A673 (cell line): ENCODE measurements at regions of chrX and their contacts with region 1.

Region 1: GRCh38 chrX:36480441-36480990 is 527.6 kb upstream of the FAM47C start:
- DNase-seq: peak; percentile 90
- H3K4me3 ChIP-seq: no peak overlapping the region
- H3K27ac ChIP-seq: peak overlapping the region; percentile 98
- H3K4me1 ChIP-seq: peaks cover 34% of the 10 kb centered on the region
- H3K27me3 ChIP-seq: no peaks in the 10 kb centered on the region
- CTCF ChIP-seq: no peak

Region 2: GRCh38 chrX:35380808-35381700 is 1099.5 kb before region 1 on chrX:
- CTCF ChIA-PET with region 1: no interaction called
- POLR2A ChIA-PET with region 1: no interaction called
- intact Hi-C with region 1: loop called (anchors 5 kb)
- DNase-seq: peak; percentile 55
- H3K4me3 ChIP-seq: no peak overlapping the region
- H3K27ac ChIP-seq: no peak overlapping the region
- H3K4me1 ChIP-seq: no peaks in the 10 kb centered on the region
- H3K27me3 ChIP-seq: no peaks in the 10 kb centered on the region
- CTCF ChIP-seq: peak; percentile 82

Region 3: GRCh38 chrX:36422368-36422767 is 58.1 kb before region 1 on chrX:
- CTCF ChIA-PET with region 1: no interaction called
- POLR2A ChIA-PET with region 1: no interaction called
- intact Hi-C with region 1: no loop called
- DNase-seq: no peak
- H3K4me3 ChIP-seq: no peak overlapping the region
- H3K27ac ChIP-seq: no peak overlapping the region
- H3K4me1 ChIP-seq: no peaks in the 10 kb centered on the region
- H3K27me3 ChIP-seq: no peaks in the 10 kb centered on the region
- CTCF ChIP-seq: no peak

Region 4: GRCh38 chrX:36434524-36435147 is 45.9 kb before region 1 on chrX:
- CTCF ChIA-PET with region 1: no interaction called
- POLR2A ChIA-PET with region 1: interaction called, 6 read pairs
- intact Hi-C with region 1: loop called (anchors 1 kb)
- DNase-seq: peak; percentile 92
- H3K4me3 ChIP-seq: no peak overlapping the region
- H3K27ac ChIP-seq: peak overlapping the region; percentile 79
- H3K4me1 ChIP-seq: peaks cover 22% of the 10 kb centered on the region
- H3K27me3 ChIP-seq: no peaks in the 10 kb centered on the region
- CTCF ChIP-seq: no peak

Region 5: DNA sequence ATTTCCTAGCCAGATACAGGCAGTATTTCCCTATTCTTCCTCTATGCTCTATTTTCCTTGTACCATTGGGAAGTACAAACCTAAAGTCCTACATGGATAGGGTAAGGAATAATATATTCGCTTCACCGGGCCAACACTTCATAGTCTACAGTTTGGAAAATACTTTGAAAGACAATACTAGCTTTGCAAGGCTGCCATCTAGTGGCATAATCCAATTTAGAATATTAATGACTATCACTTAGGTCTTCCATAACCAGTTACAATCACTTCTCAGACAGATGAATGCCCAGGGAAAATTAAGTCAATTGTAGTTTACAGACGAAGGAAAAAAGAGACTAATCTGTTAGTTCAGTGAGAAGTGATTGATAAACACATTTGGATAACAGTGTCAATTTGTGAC is 386.6 kb after region 1 on chrX:
- CTCF ChIA-PET with region 1: no interaction called
- POLR2A ChIA-PET with region 1: no interaction called
- intact Hi-C with region 1: loop called (anchors 2 kb)
- DNase-seq: peak; percentile 82
- H3K4me3 ChIP-seq: no peak overlapping the region
- H3K27ac ChIP-seq: peak overlapping the region; percentile 24
- H3K4me1 ChIP-seq: peaks cover 29% of the 10 kb centered on the region
- H3K27me3 ChIP-seq: no peaks in the 10 kb centered on the region
- CTCF ChIP-seq: peak; percentile 70

Region 6: DNA sequence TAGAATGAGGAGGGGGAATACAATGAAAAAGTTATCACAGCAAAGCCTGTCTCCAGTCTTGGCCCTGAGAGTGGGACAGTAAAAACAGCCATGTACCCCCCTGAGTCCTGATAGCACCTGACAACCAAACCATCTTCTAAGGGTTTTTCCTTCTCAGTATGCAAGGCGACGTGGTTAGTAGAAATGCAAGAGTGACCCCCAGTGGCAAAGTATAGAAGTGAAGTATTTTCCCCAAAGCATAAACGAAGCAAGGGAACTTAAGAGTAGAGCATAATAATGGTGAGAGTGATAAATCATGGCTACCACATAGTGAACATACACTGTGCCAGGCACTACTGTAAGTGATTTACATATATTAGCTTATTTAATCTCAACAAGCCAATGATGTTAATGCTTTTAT is 580.5 kb after region 1 on chrX:
- CTCF ChIA-PET with region 1: no interaction called
- POLR2A ChIA-PET with region 1: no interaction called
- intact Hi-C with region 1: loop called (anchors 5 kb)
- DNase-seq: peak; percentile 73
- H3K4me3 ChIP-seq: no peak overlapping the region
- H3K27ac ChIP-seq: no peak overlapping the region
- H3K4me1 ChIP-seq: no peaks in the 10 kb centered on the region
- H3K27me3 ChIP-seq: no peaks in the 10 kb centered on the region
- CTCF ChIP-seq: peak; percentile 72